Caco-2 (cell line): ENCODE measurements at regions of chr9 and their contacts with region 1.

Region 1: GRCh38 chr9:105157130-105157583 is 87.3 kb upstream of the SLC44A1 start:
- DNase-seq: peak in 1 of 2 experiments; percentile 52
- H3K4me3 ChIP-seq: no peak overlapping the region
- H3K4me3 Mint-ChIP-seq: no peak overlapping the region
- H3K27ac Mint-ChIP-seq: no peak overlapping the region
- H3K4me1 ChIP-seq: 0 out of 2 replicates have a peak, but pooled peaks cover 4% of the 10 kb centered on the region
- H3K4me1 Mint-ChIP-seq: no peaks in the 10 kb centered on the region
- H3K27me3 ChIP-seq: no peaks in the 10 kb centered on the region
- H3K27me3 Mint-ChIP-seq: no peaks in the 10 kb centered on the region
- CTCF ChIP-seq: peak; percentile 32 to 35

Region 2: DNA sequence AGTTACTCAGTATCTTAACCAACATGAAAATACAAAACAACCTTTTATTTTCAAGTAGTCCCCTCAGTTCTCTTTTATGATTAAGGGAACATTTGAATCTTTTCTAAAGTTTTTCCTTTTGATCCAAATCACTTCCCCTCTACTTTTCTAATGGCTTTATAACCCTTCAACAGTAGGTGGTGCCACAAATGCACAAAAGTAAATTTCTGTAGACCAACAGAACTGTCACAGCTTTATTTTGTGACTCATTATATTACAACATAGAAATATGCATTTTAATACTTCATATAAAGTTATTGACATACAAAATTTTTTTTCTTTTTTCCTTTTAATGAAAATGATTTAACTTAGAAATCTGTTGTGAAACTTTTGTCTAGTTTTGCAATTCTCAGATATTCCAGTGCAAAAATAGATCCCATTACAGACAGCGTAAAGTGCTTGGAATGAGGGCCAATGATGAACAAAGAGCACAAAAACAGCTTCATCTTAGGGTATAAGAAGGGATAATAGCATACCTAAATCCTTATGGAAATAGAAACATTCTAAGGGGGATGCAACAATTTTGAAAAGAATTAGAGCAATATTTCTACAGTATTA is 376.3 kb before region 1 on chr9:
- CTCF ChIA-PET with region 1: no interaction called
- POLR2A ChIA-PET with region 1: no interaction called
- intact Hi-C with region 1: loop called (anchors 1 kb)
- DNase-seq: peak in 1 of 2 experiments; percentile 17
- H3K4me3 ChIP-seq: no peak overlapping the region
- H3K4me3 Mint-ChIP-seq: no peak overlapping the region
- H3K27ac Mint-ChIP-seq: no peak overlapping the region
- H3K4me1 ChIP-seq: no peaks in the 10 kb centered on the region
- H3K4me1 Mint-ChIP-seq: no peaks in the 10 kb centered on the region
- H3K27me3 ChIP-seq: no peaks in the 10 kb centered on the region
- H3K27me3 Mint-ChIP-seq: no peaks in the 10 kb centered on the region
- CTCF ChIP-seq: peak; percentile 21 to 29

Region 3: GRCh38 chr9:104836235-104836634 is 320.9 kb before region 1 on chr9:
- CTCF ChIA-PET with region 1: no interaction called
- POLR2A ChIA-PET with region 1: no interaction called
- intact Hi-C with region 1: no loop called
- DNase-seq: no peak
- H3K4me3 ChIP-seq: no peak overlapping the region
- H3K4me3 Mint-ChIP-seq: no peak overlapping the region
- H3K27ac Mint-ChIP-seq: no peak overlapping the region
- H3K4me1 ChIP-seq: no peaks in the 10 kb centered on the region
- H3K4me1 Mint-ChIP-seq: peaks cover 8% of the 10 kb centered on the region
- H3K27me3 ChIP-seq: no peaks in the 10 kb centered on the region
- H3K27me3 Mint-ChIP-seq: no peaks in the 10 kb centered on the region
- CTCF ChIP-seq: no peak

Region 4: GRCh38 chr9:104863180-104863883 is 293.8 kb before region 1 on chr9:
- CTCF ChIA-PET with region 1: interaction called, 4 read pairs
- POLR2A ChIA-PET with region 1: no interaction called
- intact Hi-C with region 1: loop called (anchors 1 kb)
- DNase-seq: peak; percentile 62 to 69
- H3K4me3 ChIP-seq: no peak overlapping the region
- H3K4me3 Mint-ChIP-seq: no peak overlapping the region
- H3K27ac Mint-ChIP-seq: no peak overlapping the region
- H3K4me1 ChIP-seq: 0 out of 2 replicates have a peak, but pooled peaks cover 11% of the 10 kb centered on the region
- H3K4me1 Mint-ChIP-seq: peaks cover 19% of the 10 kb centered on the region
- H3K27me3 ChIP-seq: no peaks in the 10 kb centered on the region
- H3K27me3 Mint-ChIP-seq: no peaks in the 10 kb centered on the region
- CTCF ChIP-seq: peak; percentile 68 to 85

Region 5: GRCh38 chr9:104968025-104968982 is 188.9 kb before region 1 on chr9:
- CTCF ChIA-PET with region 1: interaction called, 3 read pairs
- POLR2A ChIA-PET with region 1: no interaction called
- intact Hi-C with region 1: loop called (anchors 2 kb)
- DNase-seq: peak; percentile 87 to 90
- H3K4me3 ChIP-seq: peak overlapping the region; percentile 77
- H3K4me3 Mint-ChIP-seq: peak overlapping the region; percentile 89
- H3K27ac Mint-ChIP-seq: peak overlapping the region; percentile 82
- H3K4me1 ChIP-seq: peaks cover 22% of the 10 kb centered on the region
- H3K4me1 Mint-ChIP-seq: peaks cover 37% of the 10 kb centered on the region
- H3K27me3 ChIP-seq: no peaks in the 10 kb centered on the region
- H3K27me3 Mint-ChIP-seq: no peaks in the 10 kb centered on the region
- CTCF ChIP-seq: no peak

Region 6: DNA sequence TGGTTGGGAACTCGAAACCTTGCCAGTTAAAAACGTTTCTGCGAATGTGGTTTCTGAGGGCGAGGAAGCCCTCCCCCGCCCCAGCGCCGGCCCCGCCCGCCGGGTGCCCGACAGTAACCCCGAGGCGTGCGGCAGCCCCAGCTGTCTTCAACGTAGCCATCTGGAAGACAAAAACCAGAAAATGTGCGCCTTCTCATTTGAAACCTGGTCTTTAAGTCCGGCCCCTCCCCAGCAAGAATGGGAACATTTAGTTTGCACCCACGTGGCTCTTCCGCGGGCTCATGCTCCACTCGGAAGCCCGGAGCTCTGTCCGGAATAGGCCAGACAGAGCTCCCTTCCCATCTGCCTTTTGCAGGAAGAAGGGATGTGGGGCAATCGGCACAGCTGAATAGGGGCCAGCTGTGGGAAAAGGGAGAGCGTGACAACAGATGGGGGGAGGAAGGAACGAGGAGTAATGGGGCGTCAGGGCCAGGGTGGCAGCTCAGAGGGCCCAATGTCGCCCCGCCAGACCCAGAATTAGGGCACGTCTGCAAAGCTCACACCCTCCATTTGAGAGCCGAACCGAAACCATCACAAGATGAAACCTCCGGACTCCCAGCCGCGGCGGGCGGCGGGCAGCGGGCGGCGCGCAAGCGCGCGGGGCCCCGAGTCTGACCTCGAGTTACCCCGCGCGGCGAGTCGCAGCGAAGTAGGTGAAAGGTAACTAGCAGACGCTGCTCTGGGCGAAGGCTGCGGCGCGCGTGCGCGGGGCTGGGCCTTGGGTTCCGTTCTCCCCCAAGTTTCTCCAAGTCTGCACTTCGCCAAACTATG is 165.8 kb before region 1 on chr9:
- CTCF ChIA-PET with region 1: no interaction called
- POLR2A ChIA-PET with region 1: no interaction called
- intact Hi-C with region 1: loop called (anchors 2 kb)
- DNase-seq: peak; percentile 84 to 85
- H3K4me3 ChIP-seq: peak overlapping the region; percentile 68
- H3K4me3 Mint-ChIP-seq: peak overlapping the region; percentile 96
- H3K27ac Mint-ChIP-seq: peak overlapping the region; percentile 82
- H3K4me1 ChIP-seq: peaks cover 29% of the 10 kb centered on the region
- H3K4me1 Mint-ChIP-seq: peaks cover 17% of the 10 kb centered on the region
- H3K27me3 ChIP-seq: no peaks in the 10 kb centered on the region
- H3K27me3 Mint-ChIP-seq: no peaks in the 10 kb centered on the region
- CTCF ChIP-seq: no peak

Region 7: DNA sequence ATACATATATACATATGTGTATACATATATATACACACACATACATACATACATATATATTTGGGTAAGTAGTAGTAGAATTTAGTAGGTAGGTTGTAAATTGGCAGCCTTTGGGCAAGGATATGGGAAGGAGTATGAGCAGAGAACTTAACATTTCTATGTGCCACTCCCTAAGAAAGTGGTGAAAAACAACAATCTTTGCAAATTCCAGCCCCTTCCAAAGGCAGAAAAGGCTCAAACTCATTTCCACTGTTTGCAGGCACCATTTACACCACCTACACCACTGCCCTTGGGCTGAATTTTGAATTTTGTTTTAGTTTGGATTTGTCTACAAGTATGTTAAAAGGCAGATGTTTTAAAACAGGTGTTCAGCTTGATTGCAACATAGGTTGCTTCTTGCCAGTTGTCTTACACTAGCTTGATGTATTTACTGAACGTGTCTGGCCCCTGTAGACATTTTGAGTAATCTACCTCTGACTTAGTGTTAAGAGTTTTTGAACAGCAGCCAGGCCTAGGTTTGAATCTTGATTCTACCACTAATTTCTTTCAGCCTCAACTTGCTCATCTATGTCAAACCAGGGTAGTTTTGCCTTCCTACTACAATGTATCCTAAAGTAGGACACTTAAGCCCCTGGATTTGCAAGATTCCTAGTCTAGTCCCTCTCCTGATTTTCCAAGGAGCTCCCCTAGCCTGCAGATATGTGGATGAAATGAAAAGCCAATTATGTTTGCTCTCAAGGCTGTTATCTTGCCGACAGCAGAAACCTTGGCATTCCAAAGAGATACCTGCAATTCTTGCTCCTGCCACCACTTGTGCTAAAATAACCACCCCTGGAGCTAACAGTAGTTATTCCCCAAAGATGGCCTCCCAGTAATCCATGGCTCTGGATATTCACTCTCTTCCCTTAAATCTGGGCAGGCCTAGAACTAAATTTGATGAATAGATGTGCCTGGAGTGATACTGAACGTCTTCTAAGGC is 69.0 kb before region 1 on chr9:
- CTCF ChIA-PET with region 1: no interaction called
- POLR2A ChIA-PET with region 1: no interaction called
- intact Hi-C with region 1: loop called (anchors 1 kb)
- DNase-seq: peak; percentile 69 to 74
- H3K4me3 ChIP-seq: no peak overlapping the region
- H3K4me3 Mint-ChIP-seq: peak overlapping the region; percentile 37
- H3K27ac Mint-ChIP-seq: peak overlapping the region; percentile 84
- H3K4me1 ChIP-seq: peaks cover 48% of the 10 kb centered on the region
- H3K4me1 Mint-ChIP-seq: peaks cover 28% of the 10 kb centered on the region
- H3K27me3 ChIP-seq: no peaks in the 10 kb centered on the region
- H3K27me3 Mint-ChIP-seq: no peaks in the 10 kb centered on the region
- CTCF ChIP-seq: no peak